ENCODE measurements at regions of chr2 and their contacts with region 1.

Region 1: DNA sequence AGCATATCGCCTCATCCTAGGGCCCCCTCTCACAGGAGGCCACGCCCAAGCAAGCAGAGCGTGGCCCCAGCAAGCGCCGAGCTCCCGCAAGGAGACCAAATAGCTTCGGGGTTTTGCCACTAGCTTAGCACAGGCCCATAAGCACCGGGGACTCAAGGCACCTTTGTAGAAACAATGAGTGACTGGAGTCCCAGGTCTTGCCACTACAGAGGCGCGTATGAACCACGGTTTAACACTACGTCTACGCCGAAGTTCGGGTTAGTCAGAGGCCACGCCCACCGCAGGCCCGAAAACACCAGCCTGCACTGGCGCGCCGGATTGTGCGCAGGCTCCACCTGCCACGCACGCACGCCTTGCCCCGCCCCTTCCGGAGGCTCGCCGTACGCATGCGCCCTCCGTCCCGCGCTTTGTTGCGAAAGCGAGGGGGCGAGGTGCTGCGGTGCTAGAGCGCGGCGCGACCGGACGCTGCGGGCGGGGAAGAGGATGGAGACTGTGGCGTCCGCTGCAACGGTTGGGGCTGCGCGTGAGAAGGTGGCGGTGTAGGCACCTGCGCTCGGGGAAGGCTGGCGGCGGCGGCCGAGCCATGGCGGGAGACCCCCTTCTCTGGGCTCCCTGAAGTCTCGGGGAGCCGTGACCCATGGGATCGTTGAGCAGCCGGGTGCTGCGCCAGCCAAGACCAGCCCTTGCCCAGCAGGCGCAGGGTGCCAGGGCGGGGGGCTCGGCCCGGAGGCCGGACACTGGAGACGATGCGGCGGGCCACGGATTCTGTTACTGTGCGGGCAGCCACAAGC is at the start of gene GMCL1:
- DNase-seq: peak; percentile 95 to 100 (median 98)
- ATAC-seq: peak; percentile 92 to 96 (median 94)
- H3K4me3 ChIP-seq: peak within 1 kb of the TSS; percentile 74 to 91
- H3K4me3 Mint-ChIP-seq: peak within 1 kb of the TSS; percentile 83 to 96 (median 95)
- H3K27ac ChIP-seq: peak within 1 kb of the TSS; percentile 97
- H3K27ac Mint-ChIP-seq: peak within 1 kb of the TSS; percentile 93 to 96
- H3K4me1 ChIP-seq: peaks cover 12 to 33% of the 10 kb centered on the region in 2 experiments
- H3K4me1 Mint-ChIP-seq: peaks cover 53 to 56% (median 54%) of the 10 kb centered on the region in 3 donors
- H3K27me3 ChIP-seq: no peaks in the 10 kb centered on the region
- H3K27me3 Mint-ChIP-seq: no peaks in the 10 kb centered on the region
- total RNA-seq, gene GMCL1: 25.4 to 32.0 (median 27.8) TPM

Region 2: GRCh38 chr2:69724540-69725159 is 104.8 kb before region 1 on chr2:
- CTCF ChIA-PET with region 1: interaction called, 8 to 11 read pairs
- POLR2A ChIA-PET with region 1: interaction called in 1 of 2 experiments, 4 read pairs
- DNase-seq: peak; percentile 53 to 90 (median 76)
- ATAC-seq: peak; percentile 82 to 86 (median 84)
- H3K4me3 ChIP-seq: peak overlapping the region; percentile 11 to 21
- H3K4me3 Mint-ChIP-seq: peak overlapping the region; percentile 17 to 39 (median 21)
- H3K27ac ChIP-seq: no peak overlapping the region
- H3K27ac Mint-ChIP-seq: no peak overlapping the region
- H3K4me1 ChIP-seq: peaks cover 3 to 5% of the 10 kb centered on the region in 2 experiments
- H3K4me1 Mint-ChIP-seq: peaks cover 0 to 6% (median 6%) of the 10 kb centered on the region in 3 donors
- H3K27me3 ChIP-seq: no peaks in the 10 kb centered on the region
- H3K27me3 Mint-ChIP-seq: no peaks in the 10 kb centered on the region

Region 3: DNA sequence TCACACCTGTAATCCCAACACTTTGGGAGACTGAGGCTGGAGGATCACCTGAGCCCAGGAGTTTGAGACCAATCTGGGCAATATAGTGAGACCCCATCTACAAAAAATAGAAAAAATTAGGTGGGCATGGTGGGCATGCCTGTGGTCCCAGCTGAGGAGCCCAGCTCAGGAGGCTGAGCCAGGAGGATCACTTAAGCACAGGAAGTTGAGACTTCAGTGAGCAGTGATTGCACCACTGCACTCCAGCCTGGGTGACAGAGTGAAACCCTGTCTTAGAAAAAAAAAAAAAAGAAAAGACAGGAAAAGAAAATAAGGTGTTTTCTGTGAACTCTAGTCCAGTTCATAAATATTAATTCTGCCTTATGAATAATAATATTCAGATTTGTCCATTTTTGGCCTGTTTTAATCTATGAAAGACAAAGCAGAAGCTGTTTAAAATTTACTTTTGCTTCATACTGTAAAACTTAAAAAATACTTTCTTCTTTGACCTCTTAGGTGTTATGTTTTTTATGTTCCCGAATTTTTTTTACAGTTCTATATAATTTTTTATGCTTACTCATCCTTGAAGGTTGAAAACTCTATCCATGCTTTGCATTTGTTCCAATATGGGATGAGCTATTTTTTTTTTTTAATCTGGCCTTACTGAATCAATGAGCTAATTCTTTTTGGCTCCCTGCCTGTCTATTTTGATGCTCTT is 96.0 kb before region 1 on chr2:
- CTCF ChIA-PET with region 1: no interaction called
- POLR2A ChIA-PET with region 1: interaction called in 1 of 2 experiments, 10 read pairs
- DNase-seq: no peak
- ATAC-seq: no peak
- H3K4me3 ChIP-seq: no peak overlapping the region
- H3K4me3 Mint-ChIP-seq: no peak overlapping the region
- H3K27ac ChIP-seq: no peak overlapping the region
- H3K27ac Mint-ChIP-seq: no peak overlapping the region
- H3K4me1 ChIP-seq: no peaks in the 10 kb centered on the region
- H3K4me1 Mint-ChIP-seq: peaks cover 0 to 2% (median 0%) of the 10 kb centered on the region in 3 donors
- H3K27me3 ChIP-seq: no peaks in the 10 kb centered on the region
- H3K27me3 Mint-ChIP-seq: no peaks in the 10 kb centered on the region

Measured in T-cell (primary cell).